Posterior vena cava (tissue), 2 donors: ENCODE measurements at regions of chr11 and their contacts with region 1.

Region 1: GRCh38 chr11:121722431-121723245 is 269.9 kb upstream of the SORL1-AS1 start:
- DNase-seq: peak; percentile 94

Region 2: GRCh38 chr11:121661880-121662486 is 60.7 kb before region 1 on chr11:
- intact Hi-C with region 1: loop called in 1 of 2 experiments (anchors 10 kb)
- DNase-seq: no peak